WTC11 (cell line): ENCODE measurements at regions of chr19 and their contacts with region 1.

Region 1: GRCh38 chr19:38869856-38870607 is 8.0 kb downstream of the RINL start:
- DNase-seq: peak; percentile 89
- ATAC-seq: peak; percentile 78
- H3K4me3 Mint-ChIP-seq: peak overlapping the region; percentile 79
- H3K27ac Mint-ChIP-seq: no peak overlapping the region
- H3K4me1 Mint-ChIP-seq: peaks cover 7% of the 10 kb centered on the region
- H3K27me3 Mint-ChIP-seq: peaks cover 21% of the 10 kb centered on the region
- CTCF ChIP-seq: peak; percentile 50

Region 2: DNA sequence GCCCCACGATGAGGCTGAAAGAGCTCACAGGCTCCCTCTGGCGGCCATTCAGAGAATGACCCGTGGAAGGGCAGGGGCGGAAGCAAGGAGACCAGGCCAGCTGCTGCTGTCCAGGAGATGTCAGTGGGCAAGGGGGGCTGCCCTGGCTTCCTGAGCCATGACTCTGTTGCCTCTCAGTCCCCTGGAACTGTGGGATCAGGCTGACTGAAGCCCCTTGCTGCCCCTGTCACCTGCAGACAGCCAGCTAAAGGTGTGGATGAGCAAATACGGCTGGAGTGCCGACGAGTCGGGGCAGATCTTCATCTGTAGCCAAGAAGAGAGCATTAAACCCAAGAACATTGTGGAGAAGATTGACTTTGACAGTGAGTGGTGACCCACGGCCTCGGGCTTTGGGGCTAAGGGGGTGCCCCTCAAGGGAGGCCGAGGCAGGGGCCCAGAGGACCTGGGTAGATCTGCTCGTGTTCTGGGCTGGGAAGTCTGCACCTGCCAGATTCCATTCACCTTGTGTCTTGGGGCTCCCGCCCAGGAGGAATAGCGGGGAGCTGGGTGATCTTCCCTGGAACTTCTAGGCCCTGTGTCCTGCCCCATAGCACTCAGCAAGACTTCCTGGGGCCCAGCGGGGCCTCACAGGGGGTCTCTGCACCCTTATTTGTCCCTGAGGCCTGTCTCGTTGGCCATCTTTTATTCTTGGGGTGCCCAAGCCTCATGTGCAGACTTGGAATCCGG is 235.1 kb before region 1 on chr19:
- CTCF ChIA-PET with region 1: no interaction called
- POLR2A ChIA-PET with region 1: no interaction called
- DNase-seq: peak; percentile 84
- ATAC-seq: peak; percentile 23; the same call in 1 of the 2 replicates
- H3K4me3 Mint-ChIP-seq: no peak overlapping the region
- H3K27ac Mint-ChIP-seq: peak overlapping the region; percentile 91
- H3K4me1 Mint-ChIP-seq: peaks cover 34% of the 10 kb centered on the region
- H3K27me3 Mint-ChIP-seq: no peaks in the 10 kb centered on the region
- CTCF ChIP-seq: peak; percentile 97

Region 3: DNA sequence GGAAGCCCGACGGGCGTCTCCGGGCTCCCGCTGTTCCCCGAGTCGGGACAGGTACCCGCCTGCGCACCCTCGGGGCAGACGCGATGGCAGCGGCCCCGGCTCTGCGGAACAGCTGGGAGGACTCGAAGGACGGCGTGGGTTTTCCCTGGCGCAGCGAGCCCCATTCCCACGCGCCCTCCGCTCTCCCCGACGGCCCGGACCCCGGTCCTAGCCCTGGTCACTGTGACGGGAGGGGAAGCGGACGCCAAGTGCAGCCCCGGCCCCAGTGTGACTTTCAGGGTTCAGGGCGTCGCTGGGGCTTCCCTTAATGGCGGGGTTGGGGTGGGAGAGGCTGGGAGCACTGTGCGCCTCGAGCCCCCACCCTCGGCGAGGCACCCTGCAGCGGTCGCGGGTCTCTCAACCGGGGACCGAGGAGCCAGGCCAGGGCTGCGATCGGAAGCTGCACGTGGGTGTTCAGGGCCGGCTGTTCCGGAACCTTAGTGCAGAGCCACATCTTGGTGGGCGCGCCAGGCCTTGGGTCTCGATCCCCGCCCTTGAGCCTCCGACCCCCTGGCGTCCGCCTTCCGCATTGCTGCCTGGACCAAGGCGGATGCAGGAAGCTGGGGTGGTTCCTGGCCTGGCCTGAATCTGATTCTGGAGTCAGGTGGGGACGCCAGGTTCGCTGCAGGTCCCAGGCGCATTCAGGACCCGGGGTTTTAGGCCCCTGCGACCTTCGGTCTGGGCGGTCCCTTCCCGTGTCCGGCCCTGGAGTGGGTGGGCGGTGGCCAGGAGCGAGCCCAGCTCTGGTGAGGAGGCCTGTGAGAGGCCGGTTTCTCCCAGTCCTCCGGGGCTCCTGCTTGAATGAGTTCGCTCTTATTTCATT is 77.6 kb before region 1 on chr19:
- CTCF ChIA-PET with region 1: no interaction called
- POLR2A ChIA-PET with region 1: no interaction called
- DNase-seq: peak; percentile 82
- ATAC-seq: peak; percentile 57
- H3K4me3 Mint-ChIP-seq: peak overlapping the region; percentile 54
- H3K27ac Mint-ChIP-seq: no peak overlapping the region
- H3K4me1 Mint-ChIP-seq: peaks cover 8% of the 10 kb centered on the region
- H3K27me3 Mint-ChIP-seq: peaks cover 23% of the 10 kb centered on the region
- CTCF ChIP-seq: no peak; the same call in 1 of the 2 replicates

Region 4: GRCh38 chr19:38803543-38803942 is 66.5 kb before region 1 on chr19:
- CTCF ChIA-PET with region 1: no interaction called
- POLR2A ChIA-PET with region 1: no interaction called
- DNase-seq: no peak
- ATAC-seq: no peak
- H3K4me3 Mint-ChIP-seq: no peak overlapping the region
- H3K27ac Mint-ChIP-seq: no peak overlapping the region
- H3K4me1 Mint-ChIP-seq: no peaks in the 10 kb centered on the region; the same call in 1 of the 2 replicates
- H3K27me3 Mint-ChIP-seq: peaks cover 9% of the 10 kb centered on the region
- CTCF ChIP-seq: no peak

Region 5: GRCh38 chr19:38849860-38850435 is 20.1 kb before region 1 on chr19 and contains the start of gene HNRNPL:
- CTCF ChIA-PET with region 1: interaction called, 14 read pairs
- POLR2A ChIA-PET with region 1: interaction called, 7 read pairs
- DNase-seq: peak; percentile 99
- ATAC-seq: peak; percentile 73
- H3K4me3 Mint-ChIP-seq: peak within 1 kb of the TSS; percentile 92
- H3K27ac Mint-ChIP-seq: peak within 1 kb of the TSS; percentile 99
- H3K4me1 Mint-ChIP-seq: peaks cover 39% of the 10 kb centered on the region
- H3K27me3 Mint-ChIP-seq: peaks cover under 1% of the 10 kb centered on the region; the same call in 1 of the 2 replicates
- CTCF ChIP-seq: peak; percentile 34; the same call in 1 of the 2 replicates
- total RNA-seq, gene HNRNPL: 680 to 779 TPM (median 683 TPM) in 3 replicates